Endothelial cell of umbilical vein (primary cell): ENCODE measurements at regions of chr9 and their contacts with region 1.

Region 1: GRCh38 chr9:112333639-112334431 is 416 bp upstream of the PTBP3 start:
- DNase-seq: peak; percentile 94
- H3K4me3 ChIP-seq: peak overlapping the region; percentile 71 to 95 (median 88)
- H3K27ac ChIP-seq: peak overlapping the region; percentile 87
- H3K4me1 ChIP-seq: peaks cover 18% of the 10 kb centered on the region
- H3K27me3 ChIP-seq: no peaks in the 10 kb centered on the region
- CTCF ChIP-seq: peak; percentile 26 to 51
- POLR2A ChIP-seq: no peak

Region 2: DNA sequence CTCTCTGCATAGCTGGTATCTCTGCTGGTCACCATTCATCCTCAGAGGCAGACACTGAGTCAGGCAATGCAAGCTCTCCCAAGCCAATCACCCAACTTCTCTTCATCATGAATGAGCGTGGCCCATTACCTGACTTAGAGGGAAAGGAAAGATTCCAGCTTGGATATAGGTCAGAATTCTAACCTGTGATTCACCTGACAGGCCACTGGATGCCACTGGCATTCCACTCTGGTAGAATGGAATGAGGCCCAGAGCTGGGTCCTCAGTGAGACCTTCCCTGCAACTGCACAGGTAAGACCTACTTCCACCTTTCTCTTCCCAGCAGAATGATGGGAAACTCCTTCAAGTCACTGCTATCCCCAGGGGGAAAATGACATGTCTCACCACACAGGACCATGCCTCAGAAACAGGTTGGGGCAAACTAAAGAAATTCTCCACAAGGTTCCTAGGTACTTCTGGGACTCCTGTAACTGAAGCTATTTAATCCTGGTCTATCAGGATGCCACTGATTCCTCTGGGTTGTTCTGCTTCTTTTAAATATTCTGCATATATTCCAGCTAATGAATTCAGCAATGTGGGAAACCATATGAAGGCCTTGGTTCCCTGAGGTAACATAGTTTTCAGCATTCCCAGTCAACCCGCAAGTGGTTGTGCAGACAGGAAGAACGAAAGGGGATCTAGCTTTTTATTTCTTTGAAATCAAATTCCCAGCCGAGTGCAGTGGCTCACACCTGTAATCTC is 220.7 kb before region 1 on chr9:
- CTCF ChIA-PET with region 1: interaction called, 13 read pairs
- POLR2A ChIA-PET with region 1: no interaction called
- dilution Hi-C with region 1: no loop called
- intact Hi-C with region 1: loop called (anchors 1 kb)
- DNase-seq: no peak
- H3K4me3 ChIP-seq: no peak overlapping the region
- H3K27ac ChIP-seq: peak overlapping the region; percentile 48
- H3K4me1 ChIP-seq: peaks cover 13% of the 10 kb centered on the region
- H3K27me3 ChIP-seq: no peaks in the 10 kb centered on the region
- CTCF ChIP-seq: peak; percentile 27 to 28
- POLR2A ChIP-seq: no peak

Region 3: GRCh38 chr9:112174218-112174964 is 159.4 kb before region 1 on chr9:
- CTCF ChIA-PET with region 1: interaction called, 9 read pairs
- POLR2A ChIA-PET with region 1: no interaction called
- dilution Hi-C with region 1: no loop called
- intact Hi-C with region 1: loop called (anchors 1 kb)
- DNase-seq: peak; percentile 35
- H3K4me3 ChIP-seq: peak overlapping the region; percentile 34 to 74 (median 60)
- H3K27ac ChIP-seq: peak overlapping the region; percentile 37
- H3K4me1 ChIP-seq: peaks cover 8% of the 10 kb centered on the region
- H3K27me3 ChIP-seq: no peaks in the 10 kb centered on the region
- CTCF ChIP-seq: no peak
- POLR2A ChIP-seq: no peak

Region 4: GRCh38 chr9:112224401-112225289 is 109.2 kb before region 1 on chr9:
- CTCF ChIA-PET with region 1: interaction called, 3 read pairs
- POLR2A ChIA-PET with region 1: no interaction called
- dilution Hi-C with region 1: no loop called
- intact Hi-C with region 1: loop called (anchors 5 kb)
- DNase-seq: no peak
- H3K4me3 ChIP-seq: no peak overlapping the region
- H3K27ac ChIP-seq: no peak overlapping the region
- H3K4me1 ChIP-seq: no peaks in the 10 kb centered on the region
- H3K27me3 ChIP-seq: no peaks in the 10 kb centered on the region
- CTCF ChIP-seq: no peak
- POLR2A ChIP-seq: no peak

Region 5: GRCh38 chr9:112299514-112299913 is 34.3 kb before region 1 on chr9:
- CTCF ChIA-PET with region 1: no interaction called
- POLR2A ChIA-PET with region 1: no interaction called
- dilution Hi-C with region 1: no loop called
- intact Hi-C with region 1: no loop called
- DNase-seq: peak; percentile 76
- H3K4me3 ChIP-seq: no peak overlapping the region
- H3K27ac ChIP-seq: peak overlapping the region; percentile 26
- H3K4me1 ChIP-seq: peaks cover 12% of the 10 kb centered on the region
- H3K27me3 ChIP-seq: no peaks in the 10 kb centered on the region
- CTCF ChIP-seq: no peak
- POLR2A ChIP-seq: no peak

Region 6: DNA sequence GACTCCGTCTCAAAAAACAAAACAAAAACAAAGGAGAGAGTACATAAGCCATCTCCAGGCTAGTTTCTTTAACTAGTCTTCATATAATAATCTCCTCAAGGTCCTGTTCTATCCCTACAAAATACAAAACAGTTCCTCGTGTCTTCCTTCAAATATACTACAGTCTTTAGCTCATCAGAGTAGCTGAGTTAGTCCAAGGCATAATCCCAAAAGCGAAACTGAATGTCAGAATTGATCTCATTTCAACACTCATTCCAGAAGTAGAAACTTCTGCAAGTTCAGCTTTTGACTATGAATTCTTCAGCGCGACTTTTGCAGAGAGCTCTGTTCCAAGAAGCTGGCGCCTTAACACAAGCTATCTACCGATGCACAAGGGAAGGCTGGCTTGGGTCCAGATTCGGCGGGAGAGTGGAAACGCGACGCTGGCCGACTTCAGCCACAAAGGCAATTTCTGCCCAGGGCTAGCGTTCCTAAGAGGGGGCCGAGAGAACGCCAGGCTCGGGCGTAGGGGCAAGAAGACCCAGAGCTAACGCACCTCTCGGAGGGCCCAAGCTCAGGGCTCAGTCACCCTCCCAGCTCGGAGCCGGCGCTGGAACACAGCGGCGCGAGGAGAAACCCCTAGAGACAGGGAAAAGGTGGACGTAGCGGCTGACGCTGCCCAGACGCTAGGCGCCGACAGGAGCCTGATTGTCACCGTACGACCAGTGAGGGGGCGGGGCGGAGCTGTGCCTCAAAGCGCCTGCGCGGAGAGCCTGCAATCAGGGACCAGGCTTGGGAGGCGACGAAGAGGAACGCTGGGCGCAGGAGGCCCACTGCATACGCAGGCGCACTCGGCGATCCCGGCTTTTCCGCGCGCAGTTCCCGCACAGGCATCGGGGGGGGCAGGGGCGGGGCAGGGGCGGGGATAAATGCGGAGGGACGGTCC is 45.6 kb after region 1 on chr9:
- CTCF ChIA-PET with region 1: interaction called, 10 read pairs
- POLR2A ChIA-PET with region 1: interaction called, 6 read pairs
- dilution Hi-C with region 1: no loop called
- intact Hi-C with region 1: loop called (anchors 2 kb)
- DNase-seq: peak; percentile 99
- H3K4me3 ChIP-seq: peak overlapping the region; percentile 79 to 98 (median 87)
- H3K27ac ChIP-seq: peak overlapping the region; percentile 94
- H3K4me1 ChIP-seq: peaks cover 16% of the 10 kb centered on the region
- H3K27me3 ChIP-seq: no peaks in the 10 kb centered on the region
- CTCF ChIP-seq: peak in 1 of 2 donors; percentile 5
- POLR2A ChIP-seq: peak; percentile 96

Region 7: GRCh38 chr9:112404508-112404932 is 70.7 kb after region 1 on chr9:
- CTCF ChIA-PET with region 1: no interaction called
- POLR2A ChIA-PET with region 1: no interaction called
- dilution Hi-C with region 1: no loop called
- intact Hi-C with region 1: no loop called
- DNase-seq: no peak
- H3K4me3 ChIP-seq: no peak overlapping the region
- H3K27ac ChIP-seq: no peak overlapping the region
- H3K4me1 ChIP-seq: no peaks in the 10 kb centered on the region
- H3K27me3 ChIP-seq: no peaks in the 10 kb centered on the region
- CTCF ChIP-seq: no peak
- POLR2A ChIP-seq: no peak

Region 8: DNA sequence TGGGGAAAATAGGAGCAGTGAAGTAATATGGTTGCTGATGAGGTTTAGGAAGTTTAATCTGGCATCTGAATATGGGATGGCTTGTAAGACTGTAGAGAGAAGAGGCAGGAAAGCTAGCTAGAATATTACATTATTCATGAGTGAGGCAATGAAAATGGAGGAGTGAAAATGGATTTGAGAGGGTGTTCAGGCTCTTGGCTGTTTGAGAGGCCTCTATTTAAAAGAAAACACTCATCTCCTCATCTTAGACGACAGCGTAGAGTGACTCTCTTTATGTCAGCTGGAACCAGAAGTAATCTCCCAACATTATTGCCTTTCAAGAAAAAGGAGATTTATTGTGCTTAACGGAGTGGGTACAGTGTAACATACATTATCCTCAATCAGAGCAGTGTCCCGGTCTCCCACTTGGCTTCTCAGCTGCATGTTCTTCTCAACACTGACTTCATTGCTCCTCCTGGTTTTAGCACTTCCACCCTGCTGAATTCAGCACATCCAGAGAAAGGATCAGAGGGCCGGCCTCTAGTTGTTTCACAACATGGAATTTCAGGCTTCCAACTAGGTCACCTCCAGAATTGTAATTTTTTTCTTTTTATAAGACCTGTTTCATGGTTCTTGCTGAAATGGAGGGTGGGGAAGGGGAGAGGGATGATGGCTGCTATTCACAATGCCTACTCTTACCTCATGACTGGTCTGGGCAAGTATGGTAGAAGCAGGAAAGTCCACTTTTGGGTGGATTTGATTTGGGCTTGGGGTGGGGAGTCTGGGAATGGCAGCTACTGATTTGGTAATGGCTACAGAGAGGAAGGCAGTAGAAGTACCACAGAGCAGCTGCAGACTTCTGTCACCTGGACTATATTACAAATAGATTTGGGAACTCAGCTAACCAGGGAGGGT is 99.9 kb after region 1 on chr9:
- CTCF ChIA-PET with region 1: no interaction called
- POLR2A ChIA-PET with region 1: no interaction called
- dilution Hi-C with region 1: no loop called
- intact Hi-C with region 1: no loop called
- DNase-seq: no peak
- H3K4me3 ChIP-seq: no peak overlapping the region
- H3K27ac ChIP-seq: no peak overlapping the region
- H3K4me1 ChIP-seq: no peaks in the 10 kb centered on the region
- H3K27me3 ChIP-seq: no peaks in the 10 kb centered on the region
- CTCF ChIP-seq: no peak
- POLR2A ChIP-seq: no peak